ENCODE measurements at regions of chr3 and their contacts with region 1.

Region 1: GRCh38 chr3:170869645-170870593 is at the start of gene RPL22L1:
- DNase-seq: peak; percentile 96
- ATAC-seq: peak; percentile 95
- H3K4me3 Mint-ChIP-seq: peak within 1 kb of the TSS; percentile 94
- H3K27ac Mint-ChIP-seq: peak within 1 kb of the TSS; percentile 99
- H3K4me1 Mint-ChIP-seq: peaks cover 15% of the 10 kb centered on the region
- H3K27me3 Mint-ChIP-seq: no peaks in the 10 kb centered on the region
- total RNA-seq, gene RPL22L1: 186 to 441 TPM

Region 2: DNA sequence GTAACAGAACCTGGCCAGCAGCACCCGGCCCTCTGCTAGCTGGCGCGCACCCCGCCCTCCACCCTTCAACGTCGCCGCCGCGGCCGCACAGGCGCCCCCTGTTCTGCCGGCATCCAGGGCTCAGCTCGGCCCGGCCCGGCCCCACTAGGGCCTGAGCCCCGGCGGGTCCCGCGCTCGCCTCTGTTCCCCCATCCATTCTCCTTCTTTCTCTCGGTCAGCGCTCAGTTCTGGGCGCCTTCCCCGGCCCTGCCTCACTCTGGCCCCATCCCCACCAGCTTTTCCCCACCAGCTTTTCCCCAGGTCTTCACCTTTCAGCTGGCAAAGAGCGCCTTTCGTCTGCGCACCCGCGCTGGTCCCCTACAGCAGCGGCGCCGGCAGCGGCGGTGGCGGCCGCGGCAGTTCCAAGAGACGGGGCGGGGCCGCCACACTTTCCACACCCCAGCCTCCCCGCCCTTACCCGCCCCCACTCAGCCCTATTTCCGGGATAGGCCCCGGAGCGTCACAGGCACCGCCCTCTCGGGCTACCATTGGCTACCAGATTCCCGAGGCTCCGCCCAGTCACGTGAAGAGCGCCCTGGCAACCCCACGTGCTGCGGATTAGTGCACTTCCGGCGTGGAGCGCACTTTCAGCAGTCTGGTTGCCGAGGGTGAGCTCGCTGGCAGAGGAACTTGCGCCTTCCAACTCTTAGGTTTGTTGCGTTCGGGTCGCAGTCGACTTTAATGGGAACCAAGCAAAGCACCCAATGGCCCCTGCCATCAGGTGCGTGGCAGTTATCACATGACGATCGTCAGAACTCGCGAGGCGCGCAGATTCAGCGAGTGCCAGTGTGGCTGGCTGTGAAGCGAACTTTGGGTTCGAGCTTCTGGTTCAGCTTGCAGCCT is 38.6 kb after region 1 on chr3 and contains the start of gene EIF5A2:
- CTCF ChIA-PET with region 1: no interaction called
- POLR2A ChIA-PET with region 1: interaction called, 5 read pairs
- intact Hi-C with region 1: loop called (anchors 1 kb)
- DNase-seq: peak; percentile 98
- ATAC-seq: peak; percentile 98
- H3K4me3 Mint-ChIP-seq: peak within 1 kb of the TSS; percentile 75
- H3K27ac Mint-ChIP-seq: peak within 1 kb of the TSS; percentile 91
- H3K4me1 Mint-ChIP-seq: peaks cover 16% of the 10 kb centered on the region
- H3K27me3 Mint-ChIP-seq: no peaks in the 10 kb centered on the region
- total RNA-seq, gene EIF5A2: 4.7 to 5.7 TPM

Region 3: GRCh38 chr3:172511783-172512762 is 1642.2 kb after region 1 on chr3:
- CTCF ChIA-PET with region 1: no interaction called
- POLR2A ChIA-PET with region 1: no interaction called
- intact Hi-C with region 1: loop called in 1 of 2 experiments (anchors 10 kb)
- DNase-seq: peak; percentile 85
- ATAC-seq: peak; percentile 73
- H3K4me3 Mint-ChIP-seq: peak overlapping the region; percentile 67
- H3K27ac Mint-ChIP-seq: peak overlapping the region; percentile 92
- H3K4me1 Mint-ChIP-seq: peaks cover 63% of the 10 kb centered on the region
- H3K27me3 Mint-ChIP-seq: no peaks in the 10 kb centered on the region